RWPE1 (cell line): ENCODE measurements at regions of chr5 and their contacts with region 1.

Region 1: DNA sequence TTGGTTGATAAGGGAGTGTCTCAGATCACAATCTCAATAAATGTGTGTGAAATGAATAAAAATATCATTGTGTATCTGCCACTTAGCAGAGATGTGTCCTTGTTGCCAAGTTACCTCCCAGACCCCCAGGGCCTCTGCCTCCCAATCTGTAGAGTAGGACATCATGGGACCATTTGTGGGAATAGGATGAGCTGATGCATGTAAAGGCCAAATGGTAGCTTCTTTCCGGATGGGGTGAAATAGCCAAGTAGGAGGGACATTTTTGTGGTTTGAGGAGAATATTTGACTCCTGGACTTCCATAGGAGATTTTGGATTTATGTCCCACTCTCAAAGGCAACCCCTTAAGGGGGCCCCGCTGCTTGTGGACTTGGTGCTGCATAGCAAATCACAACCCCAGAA is 82.6 kb upstream of the HRH2 start:
- DNase-seq: no peak
- H3K27ac ChIP-seq: no peak overlapping the region
- CTCF ChIP-seq: no peak

Region 2: GRCh38 chr5:174910245-174910737 is 665.0 kb before region 1 on chr5:
- CTCF ChIA-PET with region 1: interaction called, 10 read pairs
- POLR2A ChIA-PET with region 1: no interaction called
- DNase-seq: peak; percentile 86
- H3K27ac ChIP-seq: no peak overlapping the region
- CTCF ChIP-seq: peak; percentile 95

Region 3: GRCh38 chr5:175246242-175246888 is 328.9 kb before region 1 on chr5:
- CTCF ChIA-PET with region 1: no interaction called
- POLR2A ChIA-PET with region 1: no interaction called
- DNase-seq: peak; percentile 79
- H3K27ac ChIP-seq: peak overlapping the region; percentile 71
- CTCF ChIP-seq: no peak